ENCODE measurements at regions of chr6 and their contacts with region 1.

Region 1: DNA sequence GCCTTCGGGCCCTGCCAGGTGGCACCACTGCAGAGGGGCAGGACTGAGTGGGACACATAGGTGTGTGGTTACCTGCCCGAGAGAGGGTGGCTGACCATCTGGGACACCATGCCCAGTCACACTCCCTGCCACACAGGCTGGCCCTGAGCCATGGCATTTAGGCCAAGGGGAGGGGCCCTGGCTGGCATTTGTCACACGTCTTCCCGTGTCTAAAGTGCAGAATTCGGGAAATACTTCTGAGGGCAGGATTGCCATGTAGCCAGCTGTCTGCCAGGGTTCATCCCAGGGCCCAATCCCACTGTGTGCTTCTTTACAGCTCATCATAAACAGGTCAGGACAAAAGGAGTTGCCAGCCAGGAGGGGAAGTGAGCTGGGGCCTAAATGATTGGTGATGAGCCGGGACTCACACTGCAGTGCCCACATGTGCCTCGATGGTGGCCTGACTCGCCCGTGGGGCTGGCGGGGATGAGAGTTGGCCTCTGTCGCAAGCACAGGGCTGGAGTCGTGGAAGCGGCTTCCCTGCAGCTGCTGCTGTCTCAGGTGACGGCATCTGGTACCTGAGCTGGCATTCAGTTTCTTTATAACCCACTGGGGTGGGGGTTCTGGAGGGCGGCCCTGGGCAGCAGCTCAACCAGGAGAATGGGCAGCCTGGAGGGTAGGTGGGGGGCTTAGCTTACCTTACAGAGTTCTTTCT is 5.9 kb upstream of the UNC93A start:
- DNase-seq: no peak
- H3K4me3 Mint-ChIP-seq: no peak overlapping the region
- H3K27ac Mint-ChIP-seq: no peak overlapping the region
- H3K4me1 Mint-ChIP-seq: no peaks in the 10 kb centered on the region
- H3K27me3 Mint-ChIP-seq: no peaks in the 10 kb centered on the region

Region 2: DNA sequence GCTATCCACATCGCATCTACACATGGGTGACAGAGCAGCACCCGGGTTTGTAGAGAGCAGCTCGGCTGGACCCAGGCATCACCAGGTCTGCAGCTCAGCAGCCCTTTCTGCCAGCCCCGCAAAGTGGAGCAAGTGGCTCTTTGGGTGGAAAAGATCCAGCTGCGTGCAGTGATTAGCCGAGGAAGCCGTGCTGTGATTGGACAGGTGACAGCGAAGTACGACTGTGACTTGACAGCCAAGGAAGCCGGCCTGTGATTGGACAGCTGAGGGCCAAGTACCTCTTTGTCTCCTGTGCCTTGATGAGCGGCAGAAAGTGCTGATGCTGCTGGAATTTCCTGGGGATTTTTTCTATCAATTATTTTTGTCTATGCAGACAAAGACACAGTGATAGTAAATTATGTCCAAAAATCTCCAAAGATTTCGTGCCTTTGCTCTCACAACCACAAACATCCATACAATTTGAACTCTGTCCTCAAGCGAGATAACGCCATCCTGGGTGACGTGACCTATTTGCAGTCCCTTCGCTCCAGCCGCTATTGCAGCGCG is 65.2 kb before region 1 on chr6:
- CTCF ChIA-PET with region 1: interaction called, 4 read pairs
- intact Hi-C with region 1: loop called (anchors 2 kb)
- DNase-seq: no peak
- H3K4me3 Mint-ChIP-seq: no peak overlapping the region
- H3K27ac Mint-ChIP-seq: no peak overlapping the region
- H3K4me1 Mint-ChIP-seq: no peaks in the 10 kb centered on the region
- H3K27me3 Mint-ChIP-seq: no peaks in the 10 kb centered on the region